Activated CD4-positive, alpha-beta memory T cell treated with anti-CD3 and anti-CD28 coated beads for 36 hours (primary cell): ENCODE measurements at regions of chr9 and their contacts with region 1.

Region 1: GRCh38 chr9:93682232-93682968 is 106.0 kb downstream of the PHF2 start:
- DNase-seq: peak; percentile 76
- H3K4me3 Mint-ChIP-seq: no peak overlapping the region
- H3K27ac Mint-ChIP-seq: no peak overlapping the region
- H3K4me1 Mint-ChIP-seq: no peaks in the 10 kb centered on the region
- H3K27me3 Mint-ChIP-seq: peaks cover 6% of the 10 kb centered on the region

Region 2: GRCh38 chr9:93891549-93892310 is 209.3 kb after region 1 on chr9:
- CTCF ChIA-PET with region 1: no interaction called
- POLR2A ChIA-PET with region 1: no interaction called
- intact Hi-C with region 1: no loop called
- DNase-seq: no peak
- H3K4me3 Mint-ChIP-seq: no peak overlapping the region
- H3K27ac Mint-ChIP-seq: no peak overlapping the region
- H3K4me1 Mint-ChIP-seq: no peaks in the 10 kb centered on the region
- H3K27me3 Mint-ChIP-seq: peaks cover 2% of the 10 kb centered on the region

Region 3: DNA sequence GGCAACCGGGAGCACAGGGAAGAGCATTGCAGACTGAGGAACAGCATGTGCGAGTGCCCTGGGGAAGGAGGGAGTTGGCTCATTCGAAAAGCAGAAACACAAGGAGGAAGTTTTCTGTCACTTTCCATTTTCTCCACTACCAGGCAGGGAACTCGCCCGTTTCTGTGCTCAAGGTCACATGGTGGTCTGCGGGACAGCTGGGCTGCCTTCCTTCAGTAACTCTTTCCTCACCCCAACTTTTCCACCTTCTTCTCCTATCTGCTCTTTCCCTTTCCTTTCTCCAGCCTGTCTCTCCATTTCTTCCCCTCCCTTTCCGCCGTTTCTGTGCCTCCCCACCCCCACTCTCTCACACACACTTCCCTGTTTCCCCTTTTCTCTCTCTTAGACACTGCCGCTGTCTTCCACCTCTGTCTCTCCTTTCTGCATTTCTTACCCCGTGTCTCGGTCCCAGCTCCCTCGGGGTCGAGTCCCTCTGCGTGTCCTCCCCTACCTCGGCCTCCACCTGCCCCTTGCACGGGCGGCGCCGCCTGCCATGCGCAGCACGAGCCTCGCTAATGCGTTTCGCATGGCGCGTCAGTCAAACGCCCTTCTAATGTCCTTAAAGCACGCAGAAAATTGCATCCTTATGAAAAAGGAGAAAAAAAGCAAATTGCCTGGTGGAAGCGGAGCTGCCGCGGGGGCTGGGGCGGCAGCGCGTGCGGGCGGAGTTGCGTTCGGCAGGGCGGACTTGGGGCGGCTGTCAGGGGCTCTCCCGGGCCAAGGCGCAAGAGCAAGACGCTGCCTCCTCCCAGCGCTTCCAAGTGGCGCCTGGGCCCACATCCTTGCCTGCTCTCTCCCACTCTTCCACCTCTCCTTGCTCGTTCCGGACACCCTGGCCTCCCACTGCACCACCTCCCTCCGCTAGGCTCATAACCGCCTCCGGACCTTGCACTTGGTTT is 263.3 kb after region 1 on chr9:
- CTCF ChIA-PET with region 1: interaction called, 6 read pairs
- POLR2A ChIA-PET with region 1: no interaction called
- intact Hi-C with region 1: loop called (anchors 5 kb)
- DNase-seq: no peak
- H3K4me3 Mint-ChIP-seq: peak overlapping the region; percentile 17
- H3K27ac Mint-ChIP-seq: no peak overlapping the region
- H3K4me1 Mint-ChIP-seq: peaks cover 24% of the 10 kb centered on the region
- H3K27me3 Mint-ChIP-seq: peaks cover 82% of the 10 kb centered on the region

Region 4: DNA sequence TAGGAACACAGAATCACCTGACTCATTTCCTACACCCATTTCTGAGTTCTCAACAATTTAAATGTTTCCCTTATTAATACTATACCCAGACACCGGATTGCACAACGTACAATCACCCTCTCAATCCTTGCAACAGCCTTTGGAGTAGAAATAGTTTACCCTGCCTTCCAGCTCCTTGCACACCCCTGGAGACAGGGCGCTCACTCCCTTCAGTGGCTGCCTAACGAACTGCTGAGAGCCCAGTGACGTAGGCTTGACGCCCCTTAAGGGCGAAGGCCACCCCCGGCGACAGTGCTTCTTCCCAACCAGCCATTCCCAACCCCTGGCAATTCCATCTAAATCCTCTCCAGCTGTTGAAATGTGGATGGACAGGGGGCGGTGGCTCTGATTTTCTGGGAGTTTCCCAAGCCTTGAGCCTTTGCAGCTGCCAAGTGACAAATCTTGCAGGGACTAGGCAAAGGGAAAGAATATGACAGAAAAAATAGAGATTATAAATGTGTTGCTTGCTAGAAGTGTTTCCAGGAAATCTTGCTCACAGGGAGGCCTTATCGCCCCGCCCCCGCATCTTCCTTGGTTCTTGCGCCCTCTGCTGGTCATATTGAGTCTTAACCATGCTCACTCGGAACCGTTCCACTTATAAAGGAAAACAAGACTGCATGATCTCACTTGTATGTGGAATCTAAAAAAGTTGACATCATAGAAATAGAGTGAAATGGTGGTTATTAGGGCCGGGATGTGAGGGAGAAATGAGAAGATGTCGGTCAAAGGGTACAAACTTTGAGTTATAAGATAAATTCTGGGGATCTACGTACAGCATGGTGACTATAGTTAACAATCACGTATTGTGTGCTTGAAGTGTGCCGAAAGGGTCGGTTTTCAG is 280.4 kb after region 1 on chr9:
- CTCF ChIA-PET with region 1: interaction called, 40 read pairs
- POLR2A ChIA-PET with region 1: no interaction called
- intact Hi-C with region 1: loop called (anchors 1 kb)
- DNase-seq: peak; percentile 88
- H3K4me3 Mint-ChIP-seq: no peak overlapping the region
- H3K27ac Mint-ChIP-seq: no peak overlapping the region
- H3K4me1 Mint-ChIP-seq: peaks cover 34% of the 10 kb centered on the region
- H3K27me3 Mint-ChIP-seq: peaks cover 41% of the 10 kb centered on the region

Region 5: DNA sequence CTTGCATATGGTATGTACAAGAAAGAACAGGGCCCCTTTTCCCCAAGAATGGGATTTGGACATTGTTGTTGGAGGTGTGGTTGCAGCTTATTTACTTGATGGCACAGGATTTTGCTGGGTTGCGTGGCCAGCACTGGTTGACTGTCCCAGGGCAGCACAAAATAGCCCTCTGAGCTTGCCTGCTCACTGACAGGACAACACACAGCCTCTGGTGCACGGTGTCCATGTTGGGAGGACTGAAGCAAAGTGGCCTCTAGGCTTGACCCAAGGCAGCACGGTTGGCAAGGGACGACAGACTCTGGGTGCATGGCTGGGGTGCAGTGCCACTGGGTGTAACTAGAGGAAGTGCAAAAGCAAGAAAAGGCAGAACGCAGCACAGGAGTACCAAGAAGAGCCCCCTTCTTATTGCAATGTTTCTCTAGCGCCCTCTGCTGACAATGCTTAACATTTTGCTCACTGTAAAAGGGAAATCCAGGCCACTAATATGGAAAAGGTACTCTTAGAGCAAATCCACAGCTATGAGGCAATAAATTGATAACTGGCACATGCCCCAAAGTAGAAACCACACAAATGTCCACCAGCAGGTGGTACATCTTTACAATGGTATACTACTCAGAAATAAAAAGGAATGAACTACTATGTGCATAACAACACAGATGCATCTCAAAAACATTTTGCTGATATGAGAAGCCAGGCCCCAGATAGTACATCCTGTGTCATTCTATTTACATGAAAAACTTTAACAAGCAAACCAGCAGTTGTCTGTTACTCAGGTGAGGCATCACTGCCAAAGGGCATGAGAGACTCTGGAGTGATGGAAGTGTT is 320.1 kb after region 1 on chr9:
- CTCF ChIA-PET with region 1: interaction called, 4 read pairs
- POLR2A ChIA-PET with region 1: no interaction called
- intact Hi-C with region 1: loop called (anchors 2 kb)
- DNase-seq: peak; percentile 22
- H3K4me3 Mint-ChIP-seq: no peak overlapping the region
- H3K27ac Mint-ChIP-seq: no peak overlapping the region
- H3K4me1 Mint-ChIP-seq: no peaks in the 10 kb centered on the region
- H3K27me3 Mint-ChIP-seq: peaks cover 5% of the 10 kb centered on the region